CD8-positive, alpha-beta T cell (primary cell): ENCODE measurements at regions of chr19 and their contacts with region 1.

Region 1: GRCh38 chr19:10269333-10270179 is 1.4 kb upstream of the ICAM1 start:
- DNase-seq: peak; percentile 81 to 93 (median 88)
- ATAC-seq: peak; percentile 66
- H3K4me3 ChIP-seq: peak overlapping the region; percentile 64 to 81
- H3K4me3 Mint-ChIP-seq: peak overlapping the region; percentile 83
- H3K27ac ChIP-seq: peak overlapping the region; percentile 75 to 96
- H3K27ac Mint-ChIP-seq: peak overlapping the region; percentile 84
- H3K4me1 ChIP-seq: peaks cover 26% of the 10 kb centered on the region
- H3K4me1 Mint-ChIP-seq: peaks cover 30% of the 10 kb centered on the region
- H3K27me3 ChIP-seq: no peaks in the 10 kb centered on the region
- H3K27me3 Mint-ChIP-seq: no peaks in the 10 kb centered on the region
- CTCF ChIP-seq: peak; percentile 92

Region 2: GRCh38 chr19:9538183-9539058 is 731.1 kb before region 1 on chr19 and contains the start of gene ZNF426:
- CTCF ChIA-PET with region 1: no interaction called
- POLR2A ChIA-PET with region 1: no interaction called
- intact Hi-C with region 1: no loop called
- DNase-seq: peak; percentile 77 to 92 (median 86)
- ATAC-seq: peak; percentile 94
- H3K4me3 ChIP-seq: peak within 1 kb of the TSS; percentile 89 to 93
- H3K4me3 Mint-ChIP-seq: peak within 1 kb of the TSS; percentile 99
- H3K27ac ChIP-seq: peak within 1 kb of the TSS; percentile 91
- H3K27ac Mint-ChIP-seq: peak within 1 kb of the TSS; percentile 100
- H3K4me1 ChIP-seq: peaks cover 17% of the 10 kb centered on the region
- H3K4me1 Mint-ChIP-seq: peaks cover 35% of the 10 kb centered on the region
- H3K27me3 ChIP-seq: no peaks in the 10 kb centered on the region
- H3K27me3 Mint-ChIP-seq: no peaks in the 10 kb centered on the region
- CTCF ChIP-seq: no peak
- total RNA-seq, gene ZNF426: 16.6 to 17.9 TPM

Region 3: DNA sequence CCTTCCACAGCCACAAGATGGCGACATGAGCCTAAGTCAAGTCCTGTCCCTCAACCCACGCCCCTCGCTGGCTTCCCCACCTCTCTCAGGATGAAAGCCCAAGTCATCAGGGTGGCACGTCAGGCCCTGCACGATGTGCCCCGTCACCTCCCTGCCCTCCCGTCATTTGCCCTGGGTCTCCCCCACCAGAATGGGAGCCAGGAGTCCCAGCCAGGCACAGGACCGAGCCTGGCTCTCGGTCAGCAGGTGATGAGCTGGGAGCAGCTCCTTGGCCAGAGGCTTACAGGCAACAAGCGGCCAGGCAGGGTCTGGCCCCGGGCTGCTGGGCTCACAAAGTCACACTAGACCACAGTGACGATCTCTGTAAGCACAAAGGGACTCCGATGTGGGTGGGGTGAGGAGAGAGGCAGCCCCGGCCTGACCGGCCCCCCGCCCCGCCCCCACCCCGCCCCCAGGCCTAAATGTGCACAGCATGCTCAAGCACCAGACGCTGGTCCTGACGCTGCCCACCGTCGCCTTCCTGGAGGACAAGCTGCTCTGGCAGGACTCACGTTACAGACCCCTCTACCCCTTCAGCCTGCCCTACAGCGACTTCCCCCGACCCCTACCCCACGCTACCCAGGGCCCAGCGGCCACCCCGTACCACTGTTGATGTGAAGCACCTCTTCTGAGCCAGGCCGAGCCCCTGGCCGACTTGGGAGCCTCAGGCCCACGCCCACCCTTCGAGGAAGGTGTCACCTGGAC is 10.2 kb before region 1 on chr19:
- CTCF ChIA-PET with region 1: interaction called, 60 read pairs
- POLR2A ChIA-PET with region 1: interaction called, 3 read pairs
- intact Hi-C with region 1: no loop called
- DNase-seq: peak; percentile 68 to 93 (median 86)
- ATAC-seq: peak; percentile 98
- H3K4me3 ChIP-seq: no peak overlapping the region
- H3K4me3 Mint-ChIP-seq: no peak overlapping the region
- H3K27ac ChIP-seq: no peak overlapping the region
- H3K27ac Mint-ChIP-seq: no peak overlapping the region
- H3K4me1 ChIP-seq: no peaks in the 10 kb centered on the region
- H3K4me1 Mint-ChIP-seq: peaks cover 5% of the 10 kb centered on the region
- H3K27me3 ChIP-seq: no peaks in the 10 kb centered on the region
- H3K27me3 Mint-ChIP-seq: no peaks in the 10 kb centered on the region
- CTCF ChIP-seq: peak; percentile 58

Region 4: DNA sequence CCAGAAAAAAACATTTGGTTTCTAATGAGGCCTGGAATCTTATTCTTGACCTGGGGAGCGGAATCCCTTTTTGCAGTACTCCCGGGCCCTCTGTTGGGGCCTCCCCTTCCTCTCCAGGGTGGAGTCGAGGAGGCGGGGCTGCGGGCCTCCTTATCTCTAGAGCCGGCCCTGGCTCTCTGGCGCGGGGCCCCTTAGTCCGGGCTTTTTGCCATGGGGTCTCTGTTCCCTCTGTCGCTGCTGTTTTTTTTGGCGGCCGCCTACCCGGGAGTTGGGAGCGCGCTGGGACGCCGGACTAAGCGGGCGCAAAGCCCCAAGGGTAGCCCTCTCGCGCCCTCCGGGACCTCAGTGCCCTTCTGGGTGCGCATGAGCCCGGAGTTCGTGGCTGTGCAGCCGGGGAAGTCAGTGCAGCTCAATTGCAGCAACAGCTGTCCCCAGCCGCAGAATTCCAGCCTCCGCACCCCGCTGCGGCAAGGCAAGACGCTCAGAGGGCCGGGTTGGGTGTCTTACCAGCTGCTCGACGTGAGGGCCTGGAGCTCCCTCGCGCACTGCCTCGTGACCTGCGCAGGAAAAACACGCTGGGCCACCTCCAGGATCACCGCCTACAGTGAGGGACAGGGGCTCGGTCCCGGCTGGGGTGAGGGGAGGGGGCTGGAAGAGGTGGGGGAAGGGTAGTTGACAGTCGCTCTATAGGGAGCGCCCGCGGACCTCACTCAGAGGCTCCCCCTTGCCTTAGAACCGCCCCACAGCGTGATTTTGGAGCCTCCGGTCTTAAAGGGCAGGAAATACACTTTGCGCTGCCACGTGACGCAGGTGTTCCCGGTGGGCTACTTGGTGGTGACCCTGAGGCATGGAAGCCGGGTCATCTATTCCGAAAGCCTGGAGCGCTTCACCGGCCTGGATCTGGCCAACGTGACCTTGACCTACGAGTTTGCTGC is 17.5 kb after region 1 on chr19 and contains the start of gene ICAM4:
- CTCF ChIA-PET with region 1: interaction called, 24 read pairs
- POLR2A ChIA-PET with region 1: interaction called, 15 read pairs
- intact Hi-C with region 1: loop called in 1 of 2 experiments (anchors 1 kb)
- DNase-seq: peak in 1 of 9 experiments; percentile 48
- ATAC-seq: no peak
- H3K4me3 ChIP-seq: no peak within 1 kb of the TSS
- H3K4me3 Mint-ChIP-seq: peak within 1 kb of the TSS; percentile 73
- H3K27ac ChIP-seq: no peak within 1 kb of the TSS
- H3K27ac Mint-ChIP-seq: no peak within 1 kb of the TSS
- H3K4me1 ChIP-seq: peaks cover 57% of the 10 kb centered on the region
- H3K4me1 Mint-ChIP-seq: peaks cover 52% of the 10 kb centered on the region
- H3K27me3 ChIP-seq: peaks cover 26 to 48% of the 10 kb centered on the region in 2 experiments
- H3K27me3 Mint-ChIP-seq: peaks cover 31% of the 10 kb centered on the region
- CTCF ChIP-seq: no peak
- total RNA-seq, gene ICAM4: 0.28 TPM in 1 of 2 experiments, not detected in the other

Region 5: DNA sequence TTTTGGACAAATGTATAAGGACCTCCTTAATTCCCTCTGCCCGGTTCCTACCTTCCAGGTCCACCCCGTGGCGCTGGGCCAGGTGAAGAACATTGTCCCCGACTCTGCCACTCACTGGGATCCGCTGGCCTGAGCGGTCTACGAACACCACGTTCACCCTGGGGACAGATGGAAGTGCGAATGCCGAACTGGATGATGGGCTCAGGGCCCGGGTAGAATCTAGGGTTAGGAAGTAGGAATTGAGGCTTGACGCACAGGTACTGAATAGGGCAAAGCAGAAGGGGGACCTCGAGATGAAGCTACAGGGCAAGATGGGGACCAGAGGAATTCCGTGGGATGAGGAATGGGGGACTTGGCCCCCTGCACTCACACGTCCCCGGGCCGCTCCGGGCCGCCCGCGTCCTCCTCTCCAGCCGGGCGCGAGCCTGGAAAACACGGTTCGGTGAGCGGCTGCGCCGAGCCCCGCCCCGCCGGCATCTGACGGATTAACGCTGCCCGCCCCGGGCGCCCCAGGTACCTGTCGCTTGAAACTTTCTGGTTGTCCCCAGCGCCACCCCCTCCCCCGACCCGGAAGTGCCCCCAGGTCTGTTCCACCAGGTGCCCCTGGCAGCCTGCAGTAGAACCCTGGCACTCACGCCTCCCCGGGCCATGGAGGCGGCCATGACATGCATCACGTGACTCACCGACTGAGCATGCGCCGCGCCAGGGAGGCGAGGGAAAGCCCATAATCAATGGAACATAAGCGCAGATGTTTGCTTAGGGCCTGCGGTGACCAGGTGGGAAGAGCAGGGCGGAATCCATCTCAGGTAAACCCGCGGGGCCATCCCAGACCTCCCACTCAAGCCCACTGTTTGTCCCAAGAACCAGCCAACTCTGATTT is 46.0 kb after region 1 on chr19 and contains the start of gene FDX2:
- CTCF ChIA-PET with region 1: interaction called, 4 read pairs
- POLR2A ChIA-PET with region 1: no interaction called
- intact Hi-C with region 1: loop called (anchors 1 kb)
- DNase-seq: peak; percentile 76 to 94 (median 91)
- ATAC-seq: peak; percentile 91
- H3K4me3 ChIP-seq: peak within 1 kb of the TSS; percentile 58 to 94
- H3K4me3 Mint-ChIP-seq: peak within 1 kb of the TSS; percentile 90
- H3K27ac ChIP-seq: peak within 1 kb of the TSS; percentile 41 to 51
- H3K27ac Mint-ChIP-seq: peak within 1 kb of the TSS; percentile 89
- H3K4me1 ChIP-seq: peaks cover 13% of the 10 kb centered on the region
- H3K4me1 Mint-ChIP-seq: peaks cover 12% of the 10 kb centered on the region
- H3K27me3 ChIP-seq: no peaks in the 10 kb centered on the region
- H3K27me3 Mint-ChIP-seq: no peaks in the 10 kb centered on the region
- CTCF ChIP-seq: no peak
- total RNA-seq, gene FDX2: 3.1 to 4.2 TPM

Region 6: DNA sequence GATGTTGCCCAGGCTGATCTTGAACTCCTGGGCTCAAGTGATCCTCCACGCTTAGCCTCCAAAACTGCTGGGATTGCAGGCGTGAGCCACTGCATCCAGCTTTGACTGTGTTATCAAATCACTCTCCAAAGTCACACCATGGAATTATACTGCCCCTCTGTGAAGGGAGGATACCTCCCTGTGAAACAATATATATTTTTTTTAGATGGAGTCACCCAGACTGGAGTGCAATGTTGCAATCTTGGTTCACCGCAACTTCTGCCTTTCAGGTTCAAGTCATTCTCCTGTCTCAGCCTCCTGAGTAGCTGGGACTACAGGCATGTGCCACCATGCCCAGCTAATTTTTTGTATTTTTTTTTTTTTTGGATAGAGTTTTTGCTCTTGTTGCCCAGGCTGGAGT is 103.1 kb after region 1 on chr19:
- CTCF ChIA-PET with region 1: interaction called, 671 read pairs
- POLR2A ChIA-PET with region 1: no interaction called
- intact Hi-C with region 1: no loop called
- DNase-seq: no peak
- ATAC-seq: no peak
- H3K4me3 ChIP-seq: no peak overlapping the region
- H3K4me3 Mint-ChIP-seq: no peak overlapping the region
- H3K27ac ChIP-seq: no peak overlapping the region
- H3K27ac Mint-ChIP-seq: no peak overlapping the region
- H3K4me1 ChIP-seq: no peaks in the 10 kb centered on the region
- H3K4me1 Mint-ChIP-seq: peaks cover 9% of the 10 kb centered on the region
- H3K27me3 ChIP-seq: no peaks in the 10 kb centered on the region
- H3K27me3 Mint-ChIP-seq: no peaks in the 10 kb centered on the region
- CTCF ChIP-seq: no peak

Region 7: DNA sequence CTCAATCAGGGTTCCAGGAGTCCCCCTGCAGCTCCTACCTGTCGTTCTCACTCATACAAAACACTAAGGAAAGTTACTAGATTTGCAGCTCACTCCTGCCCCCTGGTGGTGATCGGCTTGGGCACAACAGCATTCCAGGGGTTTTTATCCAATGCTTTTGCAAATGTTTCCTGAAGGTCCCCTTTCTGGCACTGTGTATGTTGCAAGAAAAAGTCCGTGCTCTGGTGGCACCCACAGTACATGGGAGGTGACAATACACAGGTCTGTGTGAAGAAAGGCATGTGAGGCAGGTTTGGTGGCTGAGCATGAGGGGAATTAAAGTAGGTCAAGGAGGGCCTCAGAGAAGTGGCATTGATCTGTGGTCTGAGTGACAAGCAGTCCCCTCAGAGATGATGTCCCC is 119.4 kb after region 1 on chr19:
- CTCF ChIA-PET with region 1: interaction called, 671 read pairs
- POLR2A ChIA-PET with region 1: interaction called, 33 read pairs
- intact Hi-C with region 1: loop called (anchors 1 kb)
- DNase-seq: peak; percentile 64 to 92 (median 84)
- ATAC-seq: peak; percentile 65
- H3K4me3 ChIP-seq: no peak overlapping the region
- H3K4me3 Mint-ChIP-seq: no peak overlapping the region
- H3K27ac ChIP-seq: no peak overlapping the region
- H3K27ac Mint-ChIP-seq: no peak overlapping the region
- H3K4me1 ChIP-seq: no peaks in the 10 kb centered on the region
- H3K4me1 Mint-ChIP-seq: peaks cover 5% of the 10 kb centered on the region
- H3K27me3 ChIP-seq: no peaks in the 10 kb centered on the region
- H3K27me3 Mint-ChIP-seq: no peaks in the 10 kb centered on the region
- CTCF ChIP-seq: peak; percentile 95